KBM-7 (cell line): ENCODE measurements at regions of chr12 and their contacts with region 1.

Region 1: DNA sequence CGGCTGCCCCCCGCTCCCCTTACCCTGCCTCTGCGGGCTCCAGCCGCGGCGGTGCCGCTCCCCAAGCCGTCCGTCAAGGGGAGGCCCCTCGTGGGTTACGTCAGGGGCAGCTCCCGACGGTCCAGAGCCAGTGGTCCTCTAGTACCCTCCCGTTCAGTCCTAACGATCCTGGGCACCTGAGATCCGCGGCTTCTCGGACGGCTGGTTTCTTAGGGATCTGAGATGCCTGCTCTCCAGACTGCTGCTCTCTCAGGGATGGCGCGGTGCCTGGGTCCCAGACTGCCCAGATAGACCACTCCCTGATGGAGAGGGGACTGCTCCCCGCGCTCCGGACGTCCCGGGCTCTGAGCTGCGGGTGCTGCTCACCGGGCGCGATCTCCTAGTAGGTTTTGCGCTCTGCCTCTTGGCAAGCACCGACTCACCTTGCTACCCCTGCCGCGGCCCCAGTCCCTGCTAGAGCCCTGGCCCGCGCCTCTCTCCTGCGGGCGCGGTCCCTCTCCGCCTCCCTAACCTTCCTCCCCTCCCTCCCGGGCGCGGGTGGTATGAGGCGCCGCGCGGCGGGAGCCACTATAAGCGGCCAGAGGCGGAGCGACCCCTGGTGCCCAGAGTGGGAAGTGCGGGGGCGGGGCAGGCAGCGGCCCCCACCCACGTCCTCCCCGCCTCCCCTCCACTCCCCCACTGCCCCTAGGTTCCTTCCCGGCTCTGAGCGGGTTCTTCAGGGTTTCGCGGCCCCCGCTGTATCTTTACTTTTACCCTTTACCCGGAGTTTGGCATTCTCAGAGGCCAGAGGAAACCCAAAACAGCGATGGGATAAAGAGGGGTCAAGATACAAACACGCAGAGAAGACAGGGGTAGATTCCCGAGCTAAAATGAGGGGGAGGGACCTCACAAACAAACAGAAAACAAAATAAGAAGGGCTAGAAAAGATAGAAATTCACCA is at the start of gene C1QL4:
- DNase-seq: peak; percentile 94

Region 2: GRCh38 chr12:49200919-49201594 is 135.9 kb before region 1 on chr12:
- in situ Hi-C with region 1: no loop called
- DNase-seq: peak; percentile 82

Region 3: DNA sequence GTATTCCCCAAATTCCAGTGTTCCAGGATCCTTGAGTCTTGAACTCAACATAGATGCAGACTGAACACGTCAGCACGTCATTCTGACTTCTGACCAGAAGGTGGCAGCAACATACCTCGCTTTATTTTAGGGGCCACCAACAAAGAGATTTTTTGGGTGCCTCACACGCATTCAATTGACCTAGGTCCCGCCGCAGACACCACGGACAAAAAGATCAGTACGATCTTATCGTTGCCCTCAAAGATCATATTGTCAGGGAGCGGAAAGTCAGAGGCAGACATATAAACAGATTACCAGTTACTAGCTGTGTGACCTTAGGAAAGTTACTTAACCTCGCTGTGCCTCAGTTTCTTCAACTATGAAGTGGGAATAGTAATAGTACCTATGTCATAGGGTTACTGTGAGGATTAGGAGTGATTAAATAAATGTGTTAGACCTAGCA is 48.5 kb before region 1 on chr12:
- in situ Hi-C with region 1: loop called (anchors 10 kb)
- DNase-seq: peak; percentile 78

Region 4: GRCh38 chr12:49644620-49644994 is 307.7 kb after region 1 on chr12:
- in situ Hi-C with region 1: no loop called
- DNase-seq: peak; percentile 83

Region 5: DNA sequence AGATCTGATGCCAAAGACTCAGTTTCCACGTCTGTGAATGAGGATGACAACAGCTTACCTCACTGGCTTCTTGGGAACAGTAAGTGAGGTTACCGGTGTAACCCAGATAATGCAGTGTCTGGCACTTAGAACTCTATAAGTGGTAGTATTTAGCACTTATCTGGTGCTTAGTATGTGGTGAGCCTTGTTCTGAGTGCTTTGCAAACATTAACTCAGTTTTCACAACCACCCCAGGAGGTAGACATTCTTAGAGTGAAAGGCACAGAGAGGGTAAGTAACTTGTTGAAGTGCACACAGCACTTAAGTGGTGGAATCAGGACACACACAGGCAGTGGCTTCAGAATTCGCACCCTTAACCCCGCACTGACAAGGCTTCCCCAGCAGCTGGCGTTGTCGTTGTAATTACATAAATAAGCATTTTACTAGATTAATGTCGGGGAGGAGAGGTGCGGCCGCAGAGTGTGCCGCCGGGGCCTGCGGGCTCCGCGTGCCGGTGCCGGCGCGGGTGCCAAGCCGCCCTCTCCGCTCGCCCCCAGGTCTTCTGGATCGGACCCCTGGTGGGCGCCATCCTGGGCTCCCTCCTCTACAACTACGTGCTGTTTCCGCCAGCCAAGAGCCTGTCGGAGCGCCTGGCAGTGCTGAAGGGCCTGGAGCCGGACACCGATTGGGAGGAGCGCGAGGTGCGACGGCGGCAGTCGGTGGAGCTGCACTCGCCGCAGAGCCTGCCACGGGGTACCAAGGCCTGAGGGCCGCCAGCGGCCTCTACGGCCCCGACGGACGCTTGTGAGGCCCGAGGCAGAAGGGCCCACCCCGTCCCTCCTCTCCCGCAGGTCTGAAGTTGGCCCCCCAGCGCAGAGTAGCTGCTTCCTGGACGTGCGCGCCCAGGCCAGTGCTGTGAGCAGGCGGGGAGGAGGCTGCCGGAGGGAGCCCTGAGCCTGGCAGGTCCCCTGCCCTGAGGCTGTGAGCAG is 618.2 kb after region 1 on chr12:
- in situ Hi-C with region 1: no loop called
- DNase-seq: no peak